HepG2 (cell line): ENCODE measurements at regions of chr2 and their contacts with region 1.

Region 1: DNA sequence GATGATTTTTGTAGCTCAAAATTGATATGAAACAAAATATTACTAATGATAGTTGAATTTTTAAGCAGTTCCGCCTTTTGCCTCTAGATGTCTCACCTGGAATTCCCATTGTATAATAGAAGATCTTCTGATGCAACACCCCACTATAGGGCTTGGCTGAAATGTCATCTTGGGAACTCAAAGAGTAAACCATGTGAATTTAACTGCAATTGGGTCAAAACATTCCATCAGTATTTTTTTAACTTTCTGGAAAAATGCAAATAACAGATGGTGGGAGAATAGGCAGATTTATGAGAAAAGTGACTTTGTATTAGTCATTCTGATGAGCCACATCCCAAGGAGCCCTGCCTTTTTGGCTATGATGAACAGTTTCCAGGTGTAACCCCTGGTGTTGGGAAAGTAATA is 489.9 kb downstream of the NYAP2 start:
- DNase-seq: peak; percentile 57
- ATAC-seq: peak; percentile 71
- H3K4me3 ChIP-seq: no peak overlapping the region
- H3K27ac ChIP-seq: no peak overlapping the region
- H3K4me1 ChIP-seq: peaks cover 4% of the 10 kb centered on the region
- H3K27me3 ChIP-seq: no peaks in the 10 kb centered on the region
- CTCF ChIP-seq: peak; percentile 81
- EP300 ChIP-seq: peak in 1 of 2 experiments; percentile 49; a peak in 1 of 4 replicates
- POLR2A ChIP-seq: no peak
- RAD21 ChIP-seq: peak; percentile 51; the same call in 1 of the 2 replicates

Region 2: DNA sequence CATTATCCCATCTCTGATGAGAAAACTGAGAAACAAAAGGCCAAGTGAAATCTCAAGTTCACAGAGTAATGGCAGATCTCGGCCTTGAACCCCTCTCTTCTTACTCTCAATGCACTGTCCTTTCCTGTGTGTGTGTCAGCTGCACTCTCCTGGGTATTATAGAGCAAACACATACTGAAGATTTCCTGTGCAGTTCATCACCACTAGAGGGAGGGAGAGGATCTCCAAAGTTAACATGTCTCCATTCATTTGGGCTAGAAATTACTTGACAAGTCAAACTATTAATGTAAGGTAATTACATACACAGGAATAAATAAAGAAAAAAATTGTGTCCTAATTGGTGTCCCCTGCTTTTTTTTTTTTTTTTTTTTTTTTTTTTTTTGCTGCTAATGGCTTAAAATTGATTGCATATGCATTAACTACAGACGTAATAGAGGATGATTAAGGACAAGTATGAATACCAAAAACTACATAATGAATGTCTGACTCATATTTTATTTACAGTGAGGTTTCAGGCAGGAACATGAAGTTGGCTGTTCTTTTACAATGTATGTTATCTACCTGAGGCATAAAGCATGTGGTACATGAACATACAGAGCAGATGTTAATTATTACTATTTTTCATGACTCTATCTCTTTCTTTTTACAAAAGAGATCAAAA is 220.7 kb before region 1 on chr2:
- CTCF ChIA-PET with region 1: no interaction called
- POLR2A ChIA-PET with region 1: no interaction called
- in situ Hi-C with region 1: no loop called
- intact Hi-C with region 1: loop called (anchors 5 kb)
- DNase-seq: peak; percentile 65
- ATAC-seq: peak; percentile 95
- H3K4me3 ChIP-seq: no peak overlapping the region
- H3K27ac ChIP-seq: no peak overlapping the region
- H3K4me1 ChIP-seq: no peaks in the 10 kb centered on the region
- H3K27me3 ChIP-seq: no peaks in the 10 kb centered on the region
- CTCF ChIP-seq: peak; percentile 85
- EP300 ChIP-seq: no peak
- POLR2A ChIP-seq: no peak
- RAD21 ChIP-seq: 0 out of 2 replicates have a peak, but pooled peaks have one; percentile 31

Region 3: GRCh38 chr2:226118471-226119430 is 229.3 kb after region 1 on chr2:
- CTCF ChIA-PET with region 1: no interaction called
- POLR2A ChIA-PET with region 1: interaction called, 3 read pairs
- in situ Hi-C with region 1: no loop called
- intact Hi-C with region 1: loop called (anchors 5 kb)
- DNase-seq: peak; percentile 81
- ATAC-seq: peak; percentile 81
- H3K4me3 ChIP-seq: peak overlapping the region; percentile 42 to 51 (median 42); a peak in 5 of 6 replicates
- H3K27ac ChIP-seq: peak overlapping the region; percentile 54
- H3K4me1 ChIP-seq: peaks cover 65% of the 10 kb centered on the region
- H3K27me3 ChIP-seq: no peaks in the 10 kb centered on the region
- CTCF ChIP-seq: no peak
- EP300 ChIP-seq: peak; percentile 88 to 94; a peak in 3 of 4 replicates
- POLR2A ChIP-seq: no peak
- RAD21 ChIP-seq: no peak

Region 4: DNA sequence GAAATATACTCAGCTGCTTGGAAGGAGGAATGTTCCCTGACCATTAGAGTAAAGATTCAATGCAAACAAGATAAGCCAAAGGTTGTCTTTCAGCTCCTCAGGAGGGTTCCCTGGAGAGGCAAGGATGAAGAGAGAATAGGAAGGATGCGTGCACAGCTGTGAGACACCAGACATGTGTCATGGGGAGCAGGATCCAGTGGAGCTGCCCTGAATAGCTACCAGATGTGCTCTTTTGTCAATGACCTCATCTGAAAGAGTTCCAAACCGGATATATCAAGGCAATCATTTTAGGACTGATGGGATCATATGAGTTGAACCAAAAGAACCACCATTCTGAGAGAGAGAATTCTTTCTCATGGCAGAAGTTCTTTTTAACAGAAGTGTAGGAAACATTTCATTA is 419.5 kb after region 1 on chr2:
- CTCF ChIA-PET with region 1: no interaction called
- POLR2A ChIA-PET with region 1: no interaction called
- in situ Hi-C with region 1: no loop called
- intact Hi-C with region 1: loop called (anchors 5 kb)
- DNase-seq: no peak
- ATAC-seq: no peak; the same call in 2 of the 3 replicates
- H3K4me3 ChIP-seq: no peak overlapping the region
- H3K27ac ChIP-seq: no peak overlapping the region
- H3K4me1 ChIP-seq: peaks cover 11% of the 10 kb centered on the region
- H3K27me3 ChIP-seq: no peaks in the 10 kb centered on the region
- CTCF ChIP-seq: no peak
- EP300 ChIP-seq: no peak
- POLR2A ChIP-seq: no peak
- RAD21 ChIP-seq: no peak

Region 5: DNA sequence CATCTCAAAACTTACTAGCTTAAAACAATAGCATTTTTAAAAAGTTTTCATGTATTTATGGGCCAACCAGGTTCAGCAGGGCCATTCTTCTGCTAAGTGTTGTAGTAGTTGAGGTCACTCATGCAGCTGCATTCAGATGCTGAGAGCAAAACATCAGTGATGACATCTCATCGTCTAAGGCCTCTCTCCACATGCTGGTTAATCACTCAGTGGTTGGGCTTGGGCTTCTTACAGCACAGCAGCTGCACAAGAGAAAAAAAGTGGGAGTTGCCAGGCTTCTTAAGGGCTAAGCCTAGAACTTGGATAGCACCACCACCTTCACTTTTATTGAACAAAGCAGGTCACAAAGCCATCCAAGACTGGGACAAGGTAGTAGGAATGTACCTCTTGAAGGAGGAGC is 719.9 kb after region 1 on chr2:
- CTCF ChIA-PET with region 1: no interaction called
- POLR2A ChIA-PET with region 1: no interaction called
- in situ Hi-C with region 1: loop called (anchors 25 kb)
- intact Hi-C with region 1: no loop called
- DNase-seq: no peak
- ATAC-seq: no peak
- H3K4me3 ChIP-seq: no peak overlapping the region
- H3K27ac ChIP-seq: no peak overlapping the region
- H3K4me1 ChIP-seq: peaks cover 16% of the 10 kb centered on the region
- H3K27me3 ChIP-seq: no peaks in the 10 kb centered on the region
- CTCF ChIP-seq: no peak
- EP300 ChIP-seq: no peak
- POLR2A ChIP-seq: no peak
- RAD21 ChIP-seq: no peak